Thyroid gland (tissue), 4 donors: ENCODE measurements at regions of chr17 and their contacts with region 1.

Region 1: DNA sequence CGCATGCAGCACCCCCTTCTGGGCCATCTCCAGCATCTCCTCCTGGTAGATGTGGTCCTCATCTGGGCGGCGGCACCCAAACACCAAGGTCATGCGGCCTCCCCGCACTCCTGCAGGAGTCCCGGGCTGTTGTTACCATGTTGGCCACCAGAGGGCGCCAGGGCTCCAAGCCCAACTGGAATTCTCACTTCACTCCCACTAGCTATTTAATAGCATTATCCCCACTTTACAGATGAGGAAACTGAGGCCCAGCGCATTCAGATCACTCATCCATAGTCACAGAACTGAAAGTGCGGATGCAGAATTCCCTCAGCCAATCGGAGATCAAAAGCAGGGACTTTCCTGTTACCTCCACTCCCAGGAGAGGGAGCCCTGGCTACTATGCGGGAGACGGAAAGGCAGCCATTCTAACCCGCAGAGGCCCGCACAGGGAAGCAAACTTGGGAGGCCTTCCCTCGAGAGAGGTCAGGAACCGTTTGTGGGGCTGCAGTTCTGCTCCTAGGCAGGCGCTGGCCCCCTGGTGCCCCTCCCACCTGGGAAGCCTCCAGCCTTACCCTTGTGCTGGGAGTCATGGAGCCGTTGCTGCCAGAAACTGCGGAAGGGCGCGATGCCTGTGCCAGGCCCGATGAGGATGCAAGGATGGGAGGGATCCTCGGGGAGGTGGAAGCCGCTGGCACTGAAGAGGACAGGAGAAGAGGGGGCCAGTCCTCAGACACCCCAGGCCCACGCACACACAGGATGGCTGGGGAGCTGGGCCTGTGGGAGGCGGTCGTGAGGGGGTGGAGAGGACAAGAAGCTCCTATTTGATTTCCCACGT is 40.1 kb downstream of the NOS2 start:
- DNase-seq: peak; percentile 61 to 63
- H3K4me3 ChIP-seq: no peak overlapping the region
- H3K27ac ChIP-seq: no peak overlapping the region
- H3K4me1 ChIP-seq: no peaks in the 10 kb centered on the region
- H3K27me3 ChIP-seq: no peaks in the 10 kb centered on the region
- CTCF ChIP-seq: peak; percentile 64 to 94 (median 70)
- POLR2A ChIP-seq: no peak

Region 2: DNA sequence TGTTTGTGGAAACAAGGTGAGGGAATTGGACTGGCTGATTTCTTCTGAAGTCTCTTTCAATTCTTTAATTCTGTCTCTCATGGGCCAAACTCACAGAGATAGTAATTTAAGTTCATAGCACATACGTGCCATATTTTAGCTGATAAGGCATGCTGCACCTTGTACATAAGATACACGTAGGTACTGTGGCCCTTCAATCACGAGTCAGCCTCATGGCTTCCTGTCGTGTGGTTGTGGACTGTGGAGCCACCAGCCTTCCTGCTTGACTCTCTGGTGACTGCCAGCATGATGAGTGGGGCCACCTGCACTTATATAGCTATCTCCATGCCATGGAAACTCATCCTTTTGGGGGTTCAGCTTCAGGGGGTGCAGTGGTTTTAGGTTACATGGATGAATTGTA is 278.9 kb before region 1 on chr17:
- intact Hi-C with region 1: no loop called
- DNase-seq: no peak
- H3K4me3 ChIP-seq: no peak overlapping the region
- H3K27ac ChIP-seq: no peak overlapping the region
- H3K4me1 ChIP-seq: peaks cover 21 to 31% of the 10 kb centered on the region in 2 donors
- H3K27me3 ChIP-seq: no peaks in the 10 kb centered on the region
- CTCF ChIP-seq: no peak
- POLR2A ChIP-seq: no peak

Region 3: GRCh38 chr17:27654654-27655524 is 105.4 kb before region 1 on chr17:
- intact Hi-C with region 1: loop called (anchors 5 kb)
- DNase-seq: peak; percentile 64 to 68
- H3K4me3 ChIP-seq: no peak overlapping the region
- H3K27ac ChIP-seq: no peak overlapping the region
- H3K4me1 ChIP-seq: no peaks in the 10 kb centered on the region
- H3K27me3 ChIP-seq: no peaks in the 10 kb centered on the region
- CTCF ChIP-seq: peak; percentile 74 to 88 (median 81)
- POLR2A ChIP-seq: no peak